ENCODE measurements at regions of chr16 and their contacts with region 1.

Region 1: DNA sequence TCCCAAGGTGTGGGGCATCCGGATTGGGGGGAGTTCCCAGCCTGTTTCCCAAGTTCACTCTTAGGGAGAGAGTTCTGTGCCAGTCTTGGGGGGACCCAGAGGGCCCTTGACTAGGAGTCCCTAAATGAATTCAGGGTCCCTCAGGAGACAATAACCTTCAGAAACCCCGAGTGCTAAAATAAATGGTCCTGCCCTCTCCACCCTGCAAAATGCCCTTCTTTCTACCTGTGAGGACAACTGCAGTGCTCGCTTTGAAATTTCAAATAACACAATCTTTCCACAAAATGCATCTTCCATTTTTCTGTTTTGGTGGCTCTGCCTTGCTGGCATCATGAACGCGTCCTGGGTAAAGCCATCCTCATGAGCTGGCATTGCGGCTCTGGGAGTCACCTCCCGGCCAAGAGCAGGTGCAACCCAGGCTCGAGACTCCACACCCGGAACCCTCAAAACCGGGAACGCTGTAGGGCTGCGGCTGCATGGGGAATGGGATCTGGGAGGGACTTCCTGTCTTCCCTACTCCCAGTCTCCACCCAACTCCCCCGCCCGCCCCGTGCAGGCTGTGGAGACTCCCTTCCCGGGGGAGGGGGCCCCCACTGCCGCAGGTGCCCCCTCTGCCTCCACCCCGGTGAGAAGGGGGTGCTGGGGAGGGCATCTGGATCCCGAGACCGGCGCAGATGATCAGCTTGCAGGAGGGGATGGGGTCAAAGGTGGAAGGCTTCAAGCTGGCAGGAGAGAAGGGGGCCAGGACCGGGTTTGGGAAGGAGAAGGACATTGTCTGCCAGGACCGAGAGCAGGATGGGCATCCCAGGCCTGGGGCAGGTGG is at the start of gene ZNF205:
- DNase-seq: peak; percentile 76 to 78
- H3K4me3 ChIP-seq: peak within 1 kb of the TSS; percentile 58 to 69 (median 61)
- H3K27ac ChIP-seq: peak within 1 kb of the TSS in 2 of 3 donors; percentile 65 to 73
- H3K4me1 ChIP-seq: peaks cover 19 to 25% of the 10 kb centered on the region in 2 donors
- H3K27me3 ChIP-seq: no peaks in the 10 kb centered on the region
- CTCF ChIP-seq: no peak
- POLR2A ChIP-seq: no peak
- total RNA-seq, gene ZNF205: 18.5 to 28.9 (median 19.6) TPM

Region 2: GRCh38 chr16:3161136-3162018 is 49.1 kb after region 1 on chr16:
- intact Hi-C with region 1: loop called (anchors 10 kb)
- DNase-seq: no peak
- H3K4me3 ChIP-seq: no peak overlapping the region
- H3K27ac ChIP-seq: no peak overlapping the region
- H3K4me1 ChIP-seq: peaks cover 6 to 12% of the 10 kb centered on the region in 2 donors
- H3K27me3 ChIP-seq: no peaks in the 10 kb centered on the region
- CTCF ChIP-seq: no peak
- POLR2A ChIP-seq: no peak

Region 3: DNA sequence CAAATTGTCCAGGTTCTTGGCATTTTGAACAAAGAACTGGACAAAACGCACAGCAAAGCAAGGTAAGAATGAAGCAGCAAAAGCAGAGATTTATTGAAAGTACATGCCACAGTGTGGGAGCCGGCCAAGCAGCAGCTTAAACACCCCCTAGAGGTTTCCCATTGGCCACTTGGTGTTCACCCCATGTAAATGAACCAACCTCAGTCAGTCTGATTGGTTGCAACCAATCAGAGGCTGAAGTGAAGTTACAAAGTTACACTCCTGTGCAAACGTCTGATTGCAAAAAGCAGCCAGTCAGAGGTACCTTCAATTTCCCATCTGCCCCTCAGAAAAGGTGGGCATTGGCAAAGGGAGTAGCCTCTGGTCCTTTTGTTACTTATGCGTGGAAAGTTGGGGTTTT is 162.2 kb after region 1 on chr16:
- intact Hi-C with region 1: no loop called
- DNase-seq: no peak
- H3K4me3 ChIP-seq: no peak overlapping the region
- H3K27ac ChIP-seq: no peak overlapping the region
- H3K4me1 ChIP-seq: no peaks in the 10 kb centered on the region
- H3K27me3 ChIP-seq: no peaks in the 10 kb centered on the region
- CTCF ChIP-seq: no peak
- POLR2A ChIP-seq: no peak